A673 (cell line): ENCODE measurements at regions of chr6 and their contacts with region 1.

Region 1: DNA sequence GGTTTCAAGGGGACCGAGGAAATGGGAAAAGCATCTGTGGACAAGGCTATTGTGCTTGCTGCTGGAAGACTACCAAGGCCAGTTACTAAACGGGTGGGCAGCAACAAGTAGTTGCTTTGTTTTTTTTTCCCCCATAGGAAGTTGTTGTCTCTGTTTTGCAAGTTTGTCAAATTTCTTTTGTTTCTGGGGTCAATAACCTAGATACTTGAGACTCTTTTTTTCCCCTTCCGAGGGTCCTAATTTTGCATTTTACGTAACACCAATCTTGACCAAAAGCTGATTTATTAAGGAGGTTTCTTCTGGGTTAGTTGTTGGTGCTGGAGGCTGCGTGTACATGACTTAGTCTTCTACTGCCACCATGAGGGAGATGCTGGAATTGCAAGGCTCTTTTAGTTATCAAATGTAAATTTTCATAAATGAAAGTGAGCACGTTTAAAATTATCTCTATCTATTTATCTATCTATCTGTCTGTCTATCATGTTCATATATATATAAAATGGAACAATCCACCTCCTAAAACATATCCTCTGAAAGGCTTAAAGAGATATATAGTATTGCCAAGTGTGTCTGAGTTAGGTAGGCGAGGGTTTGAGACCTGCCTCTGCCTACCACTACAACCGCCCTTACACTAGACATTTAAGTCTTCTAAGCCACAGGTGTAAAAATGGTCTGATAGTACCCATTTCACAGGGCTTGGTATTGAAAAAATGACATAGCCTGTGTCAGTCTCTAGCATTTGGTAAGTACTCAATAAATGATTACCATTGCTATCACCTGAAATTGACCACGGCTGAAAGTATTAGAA is 60.2 kb downstream of the GCLC start:
- DNase-seq: peak; percentile 68
- H3K4me3 ChIP-seq: no peak overlapping the region
- H3K27ac ChIP-seq: no peak overlapping the region
- H3K4me1 ChIP-seq: no peaks in the 10 kb centered on the region
- H3K27me3 ChIP-seq: peaks cover 6% of the 10 kb centered on the region
- CTCF ChIP-seq: peak; percentile 96

Region 2: GRCh38 chr6:52724406-52725121 is 760.1 kb before region 1 on chr6:
- CTCF ChIA-PET with region 1: no interaction called
- POLR2A ChIA-PET with region 1: no interaction called
- intact Hi-C with region 1: loop called (anchors 10 kb)
- DNase-seq: peak; percentile 81
- H3K4me3 ChIP-seq: no peak overlapping the region
- H3K27ac ChIP-seq: no peak overlapping the region
- H3K4me1 ChIP-seq: no peaks in the 10 kb centered on the region
- H3K27me3 ChIP-seq: no peaks in the 10 kb centered on the region
- CTCF ChIP-seq: peak; percentile 90

Region 3: GRCh38 chr6:52839119-52840055 is 645.3 kb before region 1 on chr6:
- CTCF ChIA-PET with region 1: no interaction called
- POLR2A ChIA-PET with region 1: no interaction called
- intact Hi-C with region 1: loop called (anchors 5 kb)
- DNase-seq: peak; percentile 72
- H3K4me3 ChIP-seq: no peak overlapping the region
- H3K27ac ChIP-seq: no peak overlapping the region
- H3K4me1 ChIP-seq: no peaks in the 10 kb centered on the region
- H3K27me3 ChIP-seq: peaks cover 12% of the 10 kb centered on the region
- CTCF ChIP-seq: peak; percentile 84

Region 4: DNA sequence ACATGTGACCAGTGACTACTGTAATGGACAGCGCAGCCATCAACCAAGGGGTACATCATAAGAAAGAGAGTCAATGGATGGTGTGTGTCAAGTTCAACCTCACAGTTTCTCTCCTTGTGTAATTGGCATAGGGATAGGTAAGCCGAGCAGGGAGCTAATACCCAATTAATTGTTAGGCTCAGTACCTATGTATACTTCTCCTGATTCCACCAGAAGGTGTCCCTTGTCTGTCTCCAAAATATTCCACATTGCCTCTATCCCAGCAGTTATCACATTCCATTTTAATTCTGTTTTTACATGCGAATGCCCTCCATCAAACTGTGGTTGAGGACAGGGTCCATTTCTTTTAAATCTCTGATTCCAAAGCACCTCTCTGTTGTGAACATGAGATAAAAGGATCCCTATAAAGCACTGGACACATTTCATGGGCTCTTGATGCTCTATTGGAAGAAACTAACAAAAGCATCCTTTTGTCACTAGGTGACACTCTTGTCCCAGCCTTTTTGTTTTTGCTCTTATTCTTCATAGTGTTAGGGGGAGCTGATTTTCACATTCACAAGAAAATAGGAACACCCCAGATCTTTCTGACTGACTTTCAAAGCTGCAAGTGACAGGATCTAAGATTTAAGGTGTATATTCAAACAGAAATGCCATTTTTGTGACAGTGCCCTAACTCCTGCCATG is 380.5 kb before region 1 on chr6:
- CTCF ChIA-PET with region 1: no interaction called
- POLR2A ChIA-PET with region 1: no interaction called
- intact Hi-C with region 1: loop called (anchors 10 kb)
- DNase-seq: peak; percentile 25
- H3K4me3 ChIP-seq: no peak overlapping the region
- H3K27ac ChIP-seq: no peak overlapping the region
- H3K4me1 ChIP-seq: no peaks in the 10 kb centered on the region
- H3K27me3 ChIP-seq: no peaks in the 10 kb centered on the region
- CTCF ChIP-seq: 0 out of 2 replicates have a peak, but pooled peaks have one; percentile 21

Region 5: DNA sequence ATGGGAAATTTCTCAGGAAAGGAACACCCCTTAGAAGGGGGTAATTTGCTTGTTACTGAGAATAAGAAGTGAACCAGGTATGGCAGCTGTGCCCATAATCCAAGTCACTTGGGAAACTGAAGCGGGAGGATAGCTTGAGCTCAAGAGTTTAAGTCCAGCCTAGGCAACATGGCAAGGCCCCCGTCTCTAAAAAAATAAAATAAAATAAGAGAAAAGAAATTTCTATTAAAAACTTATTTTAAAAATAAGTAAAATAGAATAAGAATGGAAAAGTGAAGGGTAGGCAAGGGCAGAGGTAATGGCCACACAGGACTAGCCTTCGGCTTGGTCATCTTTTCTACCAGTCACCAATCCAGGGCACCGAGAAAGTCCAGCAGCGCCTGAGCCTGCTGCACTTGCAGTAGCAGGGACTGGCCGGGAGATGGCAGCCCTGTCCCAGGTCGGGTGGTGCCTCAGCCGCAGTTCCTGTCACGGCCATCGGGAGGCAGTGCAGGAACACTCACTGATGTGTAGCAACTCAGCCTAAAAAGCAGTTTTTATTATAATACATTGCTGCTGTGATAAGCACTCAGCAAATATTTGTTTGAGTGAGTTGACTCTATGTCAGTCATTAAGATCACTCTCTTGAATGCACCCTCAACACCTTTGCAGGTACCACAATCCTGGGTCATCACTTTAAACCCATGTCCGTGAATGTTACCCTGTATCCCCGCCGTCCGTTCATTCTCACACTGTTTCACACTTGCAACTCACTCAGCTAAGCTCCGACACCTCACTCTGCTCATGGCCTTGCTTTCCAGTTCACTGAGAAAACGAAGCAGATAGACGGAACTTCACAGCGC is 312.9 kb before region 1 on chr6:
- CTCF ChIA-PET with region 1: interaction called, 7 read pairs
- POLR2A ChIA-PET with region 1: no interaction called
- intact Hi-C with region 1: loop called (anchors 1 kb)
- DNase-seq: peak; percentile 74
- H3K4me3 ChIP-seq: no peak overlapping the region
- H3K27ac ChIP-seq: no peak overlapping the region
- H3K4me1 ChIP-seq: no peaks in the 10 kb centered on the region
- H3K27me3 ChIP-seq: no peaks in the 10 kb centered on the region
- CTCF ChIP-seq: peak; percentile 100